ENCODE measurements at regions of chr4 and their contacts with region 1.

Region 1: DNA sequence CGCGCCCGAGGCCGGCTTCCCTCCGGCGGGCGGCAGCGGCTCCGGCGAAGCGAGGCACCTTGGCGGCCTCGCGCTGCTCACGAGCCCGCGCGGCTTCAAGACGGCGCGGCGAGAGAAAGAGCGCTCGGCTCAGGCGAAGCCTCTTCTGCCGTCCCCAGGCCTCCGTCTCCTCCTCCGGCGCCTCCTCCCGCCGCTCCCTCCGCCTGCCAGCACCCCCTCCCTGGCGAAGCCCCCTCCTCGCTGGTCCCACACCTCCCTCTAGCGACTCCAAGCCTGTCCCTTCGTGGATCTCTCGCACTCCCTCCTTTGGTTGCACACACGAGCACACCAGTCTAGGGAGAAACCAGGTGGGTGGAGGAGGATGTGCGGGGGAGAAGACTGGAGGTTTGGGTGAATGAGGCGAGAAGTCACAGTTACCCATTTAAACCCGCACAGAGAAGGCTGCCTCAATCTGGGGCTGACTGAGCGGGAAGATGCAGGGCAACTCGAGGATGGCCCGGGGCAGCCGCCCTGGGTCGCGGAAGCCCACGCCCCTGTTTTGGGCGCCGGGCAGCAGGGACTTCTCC is at the start of gene CAMK2D:
- DNase-seq: peak; percentile 62 to 95 (median 80)
- ATAC-seq: peak; percentile 58
- H3K4me3 ChIP-seq: peak within 1 kb of the TSS; percentile 75 to 85
- H3K4me3 Mint-ChIP-seq: peak within 1 kb of the TSS; percentile 94
- H3K27ac ChIP-seq: peak within 1 kb of the TSS; percentile 96
- H3K27ac Mint-ChIP-seq: peak within 1 kb of the TSS; percentile 98
- H3K4me1 ChIP-seq: peaks cover 26% of the 10 kb centered on the region
- H3K4me1 Mint-ChIP-seq: peaks cover 38% of the 10 kb centered on the region
- H3K27me3 ChIP-seq: no peaks in the 10 kb centered on the region
- H3K27me3 Mint-ChIP-seq: no peaks in the 10 kb centered on the region
- CTCF ChIP-seq: no peak
- total RNA-seq, gene CAMK2D: 29.6 to 31.1 TPM

Region 2: GRCh38 chr4:113684534-113685091 is 77.1 kb before region 1 on chr4:
- CTCF ChIA-PET with region 1: interaction called, 4 read pairs
- POLR2A ChIA-PET with region 1: interaction called, 4 read pairs
- intact Hi-C with region 1: loop called (anchors 1 to 2 kb)
- DNase-seq: peak in 2 of 9 experiments; percentile 8 to 17
- ATAC-seq: no peak
- H3K4me3 ChIP-seq: no peak overlapping the region
- H3K4me3 Mint-ChIP-seq: no peak overlapping the region
- H3K27ac ChIP-seq: peak overlapping the region in 1 of 2 experiments; percentile 7
- H3K27ac Mint-ChIP-seq: peak overlapping the region; percentile 87
- H3K4me1 ChIP-seq: peaks cover 37% of the 10 kb centered on the region
- H3K4me1 Mint-ChIP-seq: peaks cover 53% of the 10 kb centered on the region
- H3K27me3 ChIP-seq: no peaks in the 10 kb centered on the region
- H3K27me3 Mint-ChIP-seq: no peaks in the 10 kb centered on the region
- CTCF ChIP-seq: no peak

Region 3: GRCh38 chr4:113744667-113745240 is 16.9 kb before region 1 on chr4:
- CTCF ChIA-PET with region 1: interaction called, 3 read pairs
- POLR2A ChIA-PET with region 1: interaction called, 3 read pairs
- intact Hi-C with region 1: loop called in 1 of 2 experiments (anchors 2 kb)
- DNase-seq: no peak
- ATAC-seq: no peak
- H3K4me3 ChIP-seq: no peak overlapping the region
- H3K4me3 Mint-ChIP-seq: no peak overlapping the region
- H3K27ac ChIP-seq: no peak overlapping the region
- H3K27ac Mint-ChIP-seq: no peak overlapping the region
- H3K4me1 ChIP-seq: peaks cover 3% of the 10 kb centered on the region
- H3K4me1 Mint-ChIP-seq: peaks cover 21% of the 10 kb centered on the region
- H3K27me3 ChIP-seq: no peaks in the 10 kb centered on the region
- H3K27me3 Mint-ChIP-seq: no peaks in the 10 kb centered on the region
- CTCF ChIP-seq: no peak

Region 4: DNA sequence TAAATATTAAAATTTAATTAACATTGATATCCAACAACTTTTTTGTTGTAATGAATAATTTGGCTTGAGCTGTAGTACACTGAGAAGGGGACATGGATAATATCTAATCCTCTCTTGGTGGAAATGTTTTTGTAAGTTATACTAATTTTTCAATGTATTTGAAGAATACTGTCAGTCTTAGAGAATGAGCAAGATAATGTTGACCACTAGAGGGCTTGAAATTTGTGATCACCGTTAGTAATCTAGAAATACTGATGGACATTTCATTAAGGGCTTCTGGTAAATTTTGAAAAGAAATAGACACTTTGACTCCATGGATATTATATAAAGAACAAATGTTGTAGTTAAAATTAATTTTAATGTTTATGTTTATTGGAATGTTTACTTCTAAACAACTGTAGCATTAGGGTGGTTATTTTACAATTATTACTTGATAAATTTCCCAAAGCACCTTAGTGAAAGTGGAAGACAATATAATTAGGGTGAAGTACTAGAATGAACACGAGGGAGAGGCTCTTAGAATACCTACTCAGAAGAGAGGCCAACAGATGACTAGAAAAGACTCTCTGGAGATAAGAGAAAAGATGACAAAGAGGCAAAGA is 19.8 kb after region 1 on chr4:
- CTCF ChIA-PET with region 1: no interaction called
- POLR2A ChIA-PET with region 1: no interaction called
- intact Hi-C with region 1: no loop called
- DNase-seq: peak in 2 of 9 experiments; percentile 48 to 61
- ATAC-seq: no peak
- H3K4me3 ChIP-seq: no peak overlapping the region
- H3K4me3 Mint-ChIP-seq: no peak overlapping the region
- H3K27ac ChIP-seq: no peak overlapping the region
- H3K27ac Mint-ChIP-seq: no peak overlapping the region
- H3K4me1 ChIP-seq: no peaks in the 10 kb centered on the region
- H3K4me1 Mint-ChIP-seq: peaks cover 4% of the 10 kb centered on the region
- H3K27me3 ChIP-seq: no peaks in the 10 kb centered on the region
- H3K27me3 Mint-ChIP-seq: no peaks in the 10 kb centered on the region
- CTCF ChIP-seq: peak; percentile 72

Region 5: DNA sequence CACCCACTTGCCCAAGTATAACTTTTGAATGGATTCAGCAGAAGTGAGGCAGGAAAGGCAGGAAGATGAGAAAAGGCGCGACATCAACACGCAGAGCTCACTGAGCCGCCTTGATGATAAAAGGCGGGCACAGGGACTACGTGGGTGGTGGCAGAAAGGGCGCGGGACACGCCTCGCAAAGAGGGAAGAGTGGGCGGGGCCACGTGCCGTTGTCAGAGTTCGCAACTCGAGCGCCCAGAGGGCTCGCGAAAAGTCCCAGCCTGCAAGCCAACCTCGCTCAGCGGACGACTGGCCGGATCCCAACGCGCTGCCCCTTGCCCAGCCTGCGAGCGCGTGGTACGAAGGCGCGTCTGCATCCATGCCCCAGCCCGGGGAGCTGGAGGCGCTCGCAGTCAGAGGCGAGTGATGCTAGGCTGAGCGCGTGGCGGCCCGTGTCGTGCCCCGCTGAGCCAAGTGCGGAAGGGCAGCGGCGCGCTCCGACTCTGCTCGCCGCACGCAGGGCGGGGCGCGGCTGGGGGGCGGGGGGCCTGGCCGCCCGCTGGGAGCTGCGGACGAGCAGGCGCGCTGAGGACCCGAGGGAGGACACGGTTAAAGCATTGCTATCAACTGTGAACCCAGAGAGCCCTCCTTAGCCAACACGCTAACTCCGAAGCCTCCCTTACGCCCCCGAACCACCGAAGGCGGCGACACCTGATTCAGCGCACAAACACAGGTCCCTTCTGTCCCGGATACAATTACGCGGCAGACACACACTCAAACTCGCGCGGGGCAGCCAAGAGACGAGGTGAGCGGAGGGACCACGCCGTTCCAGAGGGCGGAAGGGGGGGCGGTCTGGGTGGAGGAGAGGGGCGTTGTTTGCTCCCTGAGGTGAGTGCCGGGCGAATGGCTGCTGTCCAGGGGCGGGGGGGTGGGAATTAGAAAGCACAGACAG is 836.8 kb after region 1 on chr4 and contains the start of gene UGT8:
- CTCF ChIA-PET with region 1: no interaction called
- POLR2A ChIA-PET with region 1: no interaction called
- intact Hi-C with region 1: no loop called
- DNase-seq: peak in 3 of 9 experiments; percentile 23 to 56 (median 46)
- ATAC-seq: no peak
- H3K4me3 ChIP-seq: peak within 1 kb of the TSS; percentile 33 to 41
- H3K4me3 Mint-ChIP-seq: peak within 1 kb of the TSS; percentile 53
- H3K27ac ChIP-seq: no peak within 1 kb of the TSS
- H3K27ac Mint-ChIP-seq: no peak within 1 kb of the TSS
- H3K4me1 ChIP-seq: peaks cover 4% of the 10 kb centered on the region
- H3K4me1 Mint-ChIP-seq: peaks cover 8% of the 10 kb centered on the region
- H3K27me3 ChIP-seq: peaks cover 0 to 4% of the 10 kb centered on the region in 2 experiments
- H3K27me3 Mint-ChIP-seq: peaks cover 36% of the 10 kb centered on the region
- CTCF ChIP-seq: no peak
- total RNA-seq, gene UGT8: 0.14 to 0.36 TPM

Measured in CD8-positive, alpha-beta T cell (primary cell).